ENCODE measurements at regions of chr1 and their contacts with region 1.

Region 1: DNA sequence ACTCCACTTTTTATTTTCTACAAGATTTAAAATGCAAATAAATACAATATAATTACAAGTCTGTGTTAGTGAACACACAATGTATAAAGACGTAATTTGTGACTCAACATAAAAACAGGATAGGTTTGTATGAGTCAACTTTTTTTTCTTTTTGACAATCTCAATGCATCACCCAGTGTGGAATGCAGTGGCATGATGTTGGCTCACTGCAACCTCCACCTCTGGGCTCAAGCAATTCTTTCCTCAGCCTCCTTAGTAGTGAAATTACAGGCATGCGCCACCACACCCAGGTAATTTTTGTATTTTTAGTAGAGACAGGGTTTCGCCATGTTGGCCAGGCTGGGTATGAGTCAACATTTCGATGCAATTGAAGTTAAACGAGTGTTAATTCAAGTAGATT is 5.9 kb upstream of the SPRR2E start:
- DNase-seq: no peak
- H3K4me3 ChIP-seq: no peak overlapping the region
- H3K27ac ChIP-seq: no peak overlapping the region
- H3K27me3 ChIP-seq: peaks cover 0 to 9% (median 0%) of the 10 kb centered on the region in 45 donors
- CTCF ChIP-seq: no peak

Region 2: DNA sequence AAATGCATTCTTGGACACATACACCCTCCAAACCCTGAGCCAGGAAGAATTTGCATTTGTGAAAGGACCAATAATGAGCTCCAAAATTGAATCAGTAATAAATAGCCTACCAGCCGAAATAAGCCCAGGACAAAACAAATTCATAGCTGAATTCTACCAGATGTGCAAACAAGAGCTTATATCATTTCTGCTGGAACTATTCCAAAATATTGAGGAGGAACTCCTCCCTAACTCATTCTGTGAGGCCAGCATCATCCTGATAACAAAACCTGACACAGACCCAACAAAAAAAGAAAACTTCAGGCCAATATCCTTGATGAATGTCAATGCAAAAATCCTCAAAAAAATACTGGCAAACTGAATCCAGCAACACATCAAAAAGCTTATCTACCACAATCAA is 12.6 kb before region 1 on chr1:
- intact Hi-C with region 1: loop called in 1 of 2 experiments (anchors 2 kb)
- DNase-seq: no peak
- H3K4me3 ChIP-seq: no peak overlapping the region
- H3K27ac ChIP-seq: no peak overlapping the region
- H3K27me3 ChIP-seq: peaks cover 0 to 2% (median 0%) of the 10 kb centered on the region in 45 donors
- CTCF ChIP-seq: no peak

Measured in dorsolateral prefrontal cortex (tissue), 120 donors.